MCF 10A (cell line): ENCODE measurements at regions of chr4 and their contacts with region 1.

Region 1: DNA sequence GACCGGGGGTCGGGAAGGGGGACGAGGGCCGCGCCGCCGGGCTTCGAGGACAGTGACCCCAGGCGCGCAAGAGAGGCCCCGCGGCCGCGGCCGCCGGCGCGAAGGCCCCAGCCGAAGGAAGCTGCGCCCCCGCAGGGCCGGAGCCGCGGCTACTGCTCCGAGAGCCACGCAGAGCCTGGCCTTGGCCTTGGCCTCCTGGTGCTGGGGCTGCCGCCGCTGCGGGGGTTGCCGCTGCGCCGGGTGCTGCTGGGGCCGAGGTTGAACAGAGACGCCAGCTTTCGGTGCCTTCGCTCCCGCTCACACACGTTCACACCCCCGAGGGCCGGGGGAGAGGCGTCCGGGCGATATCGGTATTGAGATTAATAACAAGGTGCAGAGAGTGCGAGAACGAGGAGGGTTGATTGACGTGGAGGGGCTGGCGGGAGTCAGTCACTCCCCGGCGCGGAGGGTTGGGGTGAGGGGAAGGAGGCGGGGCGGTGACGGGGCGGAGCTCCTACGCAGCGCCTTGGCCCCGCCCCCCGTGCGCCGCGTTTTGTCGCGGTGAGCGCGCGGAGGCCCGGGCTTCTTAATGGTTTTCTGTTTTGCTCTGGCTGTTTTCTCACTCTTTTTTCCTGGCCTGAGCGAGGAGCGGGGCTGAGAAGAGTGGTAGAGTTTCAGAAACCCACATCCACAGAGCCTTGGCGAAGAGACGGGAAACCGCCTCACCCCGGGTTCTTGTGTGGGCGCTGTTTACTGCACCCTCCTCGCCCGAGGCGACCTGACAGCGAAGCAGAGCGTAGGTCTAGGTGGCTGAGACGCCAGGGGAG is 878 bp upstream of the CNOT6L start:
- DNase-seq: peak; percentile 90
- H3K4me3 Mint-ChIP-seq: peak overlapping the region; percentile 93
- H3K27ac Mint-ChIP-seq: peak overlapping the region; percentile 96
- H3K4me1 Mint-ChIP-seq: peaks cover 34% of the 10 kb centered on the region
- H3K27me3 Mint-ChIP-seq: no peaks in the 10 kb centered on the region
- CTCF ChIP-seq: no peak

Region 2: GRCh38 chr4:77742054-77742453 is 78.0 kb before region 1 on chr4:
- CTCF ChIA-PET with region 1: interaction called, 3 read pairs
- POLR2A ChIA-PET with region 1: interaction called, 24 read pairs
- intact Hi-C with region 1: loop called (anchors 10 kb)
- DNase-seq: peak; percentile 45
- H3K4me3 Mint-ChIP-seq: no peak overlapping the region
- H3K27ac Mint-ChIP-seq: peak overlapping the region; percentile 32
- H3K4me1 Mint-ChIP-seq: peaks cover 13% of the 10 kb centered on the region
- H3K27me3 Mint-ChIP-seq: no peaks in the 10 kb centered on the region
- CTCF ChIP-seq: no peak

Region 3: DNA sequence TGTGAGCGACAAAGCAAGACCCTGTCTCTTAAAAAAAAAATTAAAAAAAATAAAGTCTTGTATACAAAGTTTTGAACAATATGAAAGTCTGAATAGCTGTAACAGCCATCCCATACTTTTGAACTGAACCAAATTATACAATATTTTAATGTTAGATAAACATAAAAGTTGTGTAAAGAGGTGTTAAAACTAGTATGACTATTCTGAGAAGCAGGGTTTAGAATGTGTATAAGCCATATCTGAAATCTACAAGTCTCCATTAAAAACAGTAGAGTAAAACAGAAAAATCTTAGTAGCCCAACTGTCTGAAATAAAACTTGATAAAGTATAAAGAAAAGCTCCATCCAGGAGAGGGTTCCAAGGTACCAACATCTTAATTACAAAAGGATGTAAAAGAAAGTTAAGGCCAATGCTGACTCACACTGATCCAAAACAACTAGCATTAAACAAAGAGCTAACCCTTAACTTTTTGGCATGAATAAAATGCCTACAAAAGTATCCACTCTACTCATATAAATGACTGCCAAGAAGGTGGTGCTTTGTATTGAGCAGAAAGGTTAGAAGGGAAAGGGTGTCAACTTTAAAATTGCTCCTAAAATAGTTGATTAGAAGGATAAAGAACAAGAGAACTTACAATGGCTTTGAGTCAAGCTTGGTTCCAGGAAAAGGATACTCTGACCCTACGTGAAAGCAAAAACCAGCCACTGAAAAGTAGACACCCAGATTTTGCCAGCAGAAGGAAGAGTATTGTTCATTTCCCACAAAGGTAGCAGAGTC is 19.4 kb before region 1 on chr4:
- CTCF ChIA-PET with region 1: interaction called, 9 read pairs
- POLR2A ChIA-PET with region 1: interaction called, 31 read pairs
- intact Hi-C with region 1: no loop called
- DNase-seq: no peak
- H3K4me3 Mint-ChIP-seq: no peak overlapping the region
- H3K27ac Mint-ChIP-seq: no peak overlapping the region
- H3K4me1 Mint-ChIP-seq: peaks cover 29% of the 10 kb centered on the region
- H3K27me3 Mint-ChIP-seq: no peaks in the 10 kb centered on the region
- CTCF ChIP-seq: no peak

Region 4: DNA sequence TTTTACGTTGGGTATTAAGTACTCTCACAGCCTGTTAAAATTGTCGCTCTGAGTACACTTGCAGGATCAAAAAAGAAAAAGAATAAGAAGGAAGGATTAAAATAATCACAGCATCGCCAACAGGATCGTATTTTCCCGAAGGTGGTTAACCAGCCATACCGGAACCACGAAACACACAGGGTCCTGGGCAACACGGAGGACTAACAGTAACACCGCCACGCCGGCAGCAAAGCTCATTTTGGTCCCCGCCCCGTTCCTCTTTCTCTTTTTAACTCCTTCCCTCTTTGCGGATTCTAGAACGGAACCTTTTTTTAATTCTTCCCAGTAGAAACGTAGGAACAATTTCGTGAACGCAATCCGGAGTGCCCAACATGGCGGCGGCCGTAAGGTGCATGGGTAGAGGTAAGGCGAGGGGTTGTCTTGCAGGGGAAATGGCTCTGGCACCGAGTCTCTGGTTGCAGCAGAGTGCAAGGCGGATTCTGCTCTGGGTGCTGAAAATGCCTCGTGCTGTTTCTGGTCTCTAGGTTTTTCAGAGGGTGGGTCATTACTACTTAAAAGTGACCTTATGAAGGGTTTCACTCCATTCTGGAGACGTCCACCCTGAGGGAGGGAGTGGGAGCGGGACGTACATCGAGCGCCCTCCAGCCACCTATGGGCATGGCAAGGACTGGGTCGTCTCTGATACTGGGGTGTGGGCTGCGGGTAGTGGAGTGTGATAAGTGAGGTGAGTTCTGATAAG is 42.6 kb after region 1 on chr4 and contains the start of gene MRPL1:
- CTCF ChIA-PET with region 1: interaction called, 37 read pairs
- POLR2A ChIA-PET with region 1: interaction called, 332 read pairs
- intact Hi-C with region 1: loop called (anchors 1 kb)
- DNase-seq: peak; percentile 96
- H3K4me3 Mint-ChIP-seq: peak within 1 kb of the TSS; percentile 90
- H3K27ac Mint-ChIP-seq: peak within 1 kb of the TSS; percentile 99
- H3K4me1 Mint-ChIP-seq: peaks cover 15% of the 10 kb centered on the region
- H3K27me3 Mint-ChIP-seq: no peaks in the 10 kb centered on the region
- CTCF ChIP-seq: no peak
- total RNA-seq, gene MRPL1: 36.8 and 53.3 TPM in 2 replicates

Region 5: GRCh38 chr4:77881460-77882278 is 61.6 kb after region 1 on chr4:
- CTCF ChIA-PET with region 1: interaction called, 11 read pairs
- POLR2A ChIA-PET with region 1: interaction called, 71 read pairs
- intact Hi-C with region 1: no loop called
- DNase-seq: peak; percentile 48
- H3K4me3 Mint-ChIP-seq: peak overlapping the region; percentile 26
- H3K27ac Mint-ChIP-seq: peak overlapping the region; percentile 87
- H3K4me1 Mint-ChIP-seq: peaks cover 22% of the 10 kb centered on the region
- H3K27me3 Mint-ChIP-seq: no peaks in the 10 kb centered on the region
- CTCF ChIP-seq: peak; percentile 7

Region 6: DNA sequence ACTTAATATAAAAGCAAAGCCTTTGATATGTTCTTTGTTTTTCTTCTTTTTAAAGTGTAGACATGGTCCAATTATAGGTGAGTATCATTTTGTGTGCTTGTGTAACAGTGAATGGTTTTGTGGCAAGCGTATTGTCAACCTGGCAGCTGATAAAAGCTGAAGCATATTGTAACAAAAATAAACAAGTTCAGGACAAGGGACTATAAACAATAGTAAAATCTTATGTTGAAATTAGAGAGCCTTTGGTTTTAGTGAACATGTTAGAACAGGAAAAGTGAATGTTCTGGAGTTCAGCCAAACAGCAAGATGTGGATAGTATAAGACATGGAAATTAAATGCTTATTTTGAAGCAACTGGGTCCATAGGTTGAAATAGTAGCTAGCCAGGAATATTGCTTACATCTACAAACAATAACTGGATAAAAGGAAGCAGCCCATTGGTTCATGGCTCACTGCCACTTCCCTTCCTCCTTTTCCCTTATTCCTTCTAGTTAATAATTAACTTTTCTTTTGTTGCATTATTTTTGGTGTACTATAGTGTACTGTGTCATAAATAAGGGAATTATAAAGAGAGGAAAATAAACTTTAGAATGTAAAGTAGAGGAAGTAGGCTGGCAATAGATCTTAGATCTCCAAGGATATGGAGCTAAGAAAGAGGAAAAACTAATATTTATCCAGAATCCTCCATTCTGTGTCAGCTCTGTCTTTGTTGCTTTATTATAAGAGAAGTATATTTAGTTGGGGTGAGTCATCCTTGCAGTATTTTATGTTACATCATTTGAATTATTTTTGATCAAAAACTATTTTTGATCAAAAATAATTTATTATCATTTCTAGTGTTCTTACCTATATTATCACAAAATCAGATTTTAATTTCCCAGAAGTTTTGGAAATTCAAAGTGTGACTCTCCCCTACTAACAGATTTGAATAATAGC is 108.2 kb after region 1 on chr4:
- CTCF ChIA-PET with region 1: interaction called, 4 read pairs
- POLR2A ChIA-PET with region 1: interaction called, 41 read pairs
- intact Hi-C with region 1: no loop called
- DNase-seq: peak; percentile 92
- H3K4me3 Mint-ChIP-seq: no peak overlapping the region
- H3K27ac Mint-ChIP-seq: peak overlapping the region; percentile 73
- H3K4me1 Mint-ChIP-seq: peaks cover 27% of the 10 kb centered on the region
- H3K27me3 Mint-ChIP-seq: no peaks in the 10 kb centered on the region
- CTCF ChIP-seq: no peak